ENCODE measurements at regions of chr6 and their contacts with region 1.

Region 1: GRCh38 chr6:111259089-111259831 is 172.0 kb downstream of the SLC16A10 start:
- DNase-seq: peak; percentile 96 to 99
- H3K4me3 ChIP-seq: peak overlapping the region; percentile 63 to 90
- H3K27ac ChIP-seq: peak overlapping the region; percentile 78 to 87
- H3K4me1 ChIP-seq: peaks cover 0 to 11% of the 10 kb centered on the region in 2 donors
- H3K27me3 ChIP-seq: no peaks in the 10 kb centered on the region
- CTCF ChIP-seq: peak; percentile 92 to 96 (median 94)

Region 2: GRCh38 chr6:111011360-111012142 is 247.7 kb before region 1 on chr6:
- intact Hi-C with region 1: loop called (anchors 5 kb)
- DNase-seq: no peak
- H3K4me3 ChIP-seq: no peak overlapping the region
- H3K27ac ChIP-seq: no peak overlapping the region
- H3K4me1 ChIP-seq: peaks cover 3 to 5% of the 10 kb centered on the region in 2 donors
- H3K27me3 ChIP-seq: no peaks in the 10 kb centered on the region
- CTCF ChIP-seq: peak; percentile 45 to 64 (median 55)

Region 3: GRCh38 chr6:111220383-111221031 is 38.8 kb before region 1 on chr6:
- intact Hi-C with region 1: loop called (anchors 5 kb)
- DNase-seq: no peak
- H3K4me3 ChIP-seq: no peak overlapping the region
- H3K27ac ChIP-seq: peak overlapping the region in 1 of 2 donors; percentile 8
- H3K4me1 ChIP-seq: peaks cover 0 to 9% of the 10 kb centered on the region in 2 donors
- H3K27me3 ChIP-seq: no peaks in the 10 kb centered on the region
- CTCF ChIP-seq: no peak

Region 4: GRCh38 chr6:111230351-111231089 is 28.7 kb before region 1 on chr6:
- intact Hi-C with region 1: loop called (anchors 2 kb)
- DNase-seq: no peak
- H3K4me3 ChIP-seq: no peak overlapping the region
- H3K27ac ChIP-seq: peak overlapping the region in 1 of 2 donors; percentile 59
- H3K4me1 ChIP-seq: peaks cover 0 to 24% of the 10 kb centered on the region in 2 donors
- H3K27me3 ChIP-seq: no peaks in the 10 kb centered on the region
- CTCF ChIP-seq: no peak

Region 5: DNA sequence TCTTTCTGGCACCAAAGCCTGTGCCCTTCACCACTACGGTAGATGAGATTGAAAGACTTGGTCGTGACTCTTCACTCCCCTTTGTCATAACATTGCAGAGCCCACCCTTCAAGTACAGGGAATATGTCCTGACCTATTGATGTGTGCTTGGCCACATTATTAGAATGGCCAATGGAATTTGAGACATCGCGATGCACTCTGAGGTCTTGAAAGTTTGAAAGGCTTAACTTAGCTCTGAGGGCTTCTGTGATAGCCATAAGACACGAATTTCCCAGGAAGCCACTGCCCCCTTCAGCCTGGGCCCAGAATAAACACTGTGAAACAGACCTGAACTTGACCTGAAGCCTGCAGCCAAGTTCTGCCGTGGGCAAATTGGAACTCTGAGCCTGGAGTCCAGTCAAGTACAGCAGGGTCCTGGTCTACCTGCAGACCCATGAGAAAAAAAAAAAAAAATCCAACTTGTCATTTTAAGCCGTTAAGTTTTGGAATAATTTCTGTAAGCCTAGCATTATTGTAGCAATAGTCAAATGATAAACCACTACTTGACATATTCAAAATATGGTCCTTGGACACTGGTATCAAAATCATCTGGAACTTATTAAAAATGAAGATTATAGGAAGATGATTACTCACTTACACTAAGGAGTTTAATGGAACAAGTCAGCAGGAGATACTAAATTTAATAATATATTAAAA is 383.4 kb after region 1 on chr6:
- intact Hi-C with region 1: loop called (anchors 5 kb)
- DNase-seq: peak in 1 of 2 donors; percentile 80
- H3K4me3 ChIP-seq: no peak overlapping the region
- H3K27ac ChIP-seq: no peak overlapping the region
- H3K4me1 ChIP-seq: no peaks in the 10 kb centered on the region
- H3K27me3 ChIP-seq: no peaks in the 10 kb centered on the region
- CTCF ChIP-seq: peak; percentile 51 to 69 (median 59)